Mammary epithelial cell (primary cell): ENCODE measurements at regions of chr20 and their contacts with region 1.

Region 1: GRCh38 chr20:58309575-58310290 is at the start of gene RAB22A:
- DNase-seq: peak; percentile 68
- H3K4me3 ChIP-seq: peak within 1 kb of the TSS; percentile 84 to 96 (median 93)
- H3K27ac ChIP-seq: peak within 1 kb of the TSS; percentile 91
- H3K4me1 ChIP-seq: peaks cover 50% of the 10 kb centered on the region
- H3K27me3 ChIP-seq: no peaks in the 10 kb centered on the region
- CTCF ChIP-seq: no peak
- total RNA-seq, gene RAB22A: 24.7 to 24.8 TPM

Region 2: GRCh38 chr20:58251921-58252591 is 57.7 kb before region 1 on chr20:
- CTCF ChIA-PET with region 1: no interaction called
- dilution Hi-C with region 1: no loop called
- in situ Hi-C with region 1: loop called in 1 of 2 experiments (anchors 5 kb)
- intact Hi-C with region 1: no loop called
- DNase-seq: peak; percentile 85
- H3K4me3 ChIP-seq: no peak overlapping the region
- H3K27ac ChIP-seq: peak overlapping the region; percentile 57
- H3K4me1 ChIP-seq: peaks cover 14% of the 10 kb centered on the region
- H3K27me3 ChIP-seq: no peaks in the 10 kb centered on the region
- CTCF ChIP-seq: no peak

Region 3: DNA sequence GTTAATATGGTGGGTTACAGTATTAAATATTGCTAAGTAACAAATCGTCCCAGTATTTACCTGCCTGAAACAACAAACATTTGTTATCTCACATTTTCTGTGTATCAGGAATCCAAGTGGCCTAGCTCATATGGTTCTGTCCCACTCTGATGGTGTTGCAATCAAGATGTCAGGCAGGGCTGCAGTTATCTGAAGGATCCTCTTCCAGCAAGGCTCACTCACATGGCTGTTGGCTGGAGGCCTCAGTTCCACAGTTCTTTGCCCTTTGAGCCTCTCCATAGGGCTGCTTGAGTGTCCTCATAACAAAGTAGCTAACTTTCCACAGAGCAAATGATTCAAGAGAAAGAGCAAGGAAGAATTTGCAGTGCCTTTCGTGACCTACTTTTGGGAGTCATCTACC is 17.5 kb after region 1 on chr20:
- CTCF ChIA-PET with region 1: no interaction called
- dilution Hi-C with region 1: no loop called
- in situ Hi-C with region 1: no loop called
- intact Hi-C with region 1: loop called (anchors 2 kb)
- DNase-seq: no peak
- H3K4me3 ChIP-seq: no peak overlapping the region
- H3K27ac ChIP-seq: no peak overlapping the region
- H3K4me1 ChIP-seq: no peaks in the 10 kb centered on the region
- H3K27me3 ChIP-seq: no peaks in the 10 kb centered on the region
- CTCF ChIP-seq: no peak

Region 4: GRCh38 chr20:58388882-58389323 is 79.2 kb after region 1 on chr20 and contains the start of gene VAPB:
- CTCF ChIA-PET with region 1: no interaction called
- dilution Hi-C with region 1: no loop called
- in situ Hi-C with region 1: no loop called
- intact Hi-C with region 1: loop called (anchors 2 kb)
- DNase-seq: peak; percentile 92
- H3K4me3 ChIP-seq: peak within 1 kb of the TSS; percentile 81 to 91 (median 90)
- H3K27ac ChIP-seq: peak within 1 kb of the TSS; percentile 93
- H3K4me1 ChIP-seq: peaks cover 10% of the 10 kb centered on the region
- H3K27me3 ChIP-seq: no peaks in the 10 kb centered on the region
- CTCF ChIP-seq: no peak
- total RNA-seq, gene VAPB: 14.7 to 52.8 TPM

Region 5: DNA sequence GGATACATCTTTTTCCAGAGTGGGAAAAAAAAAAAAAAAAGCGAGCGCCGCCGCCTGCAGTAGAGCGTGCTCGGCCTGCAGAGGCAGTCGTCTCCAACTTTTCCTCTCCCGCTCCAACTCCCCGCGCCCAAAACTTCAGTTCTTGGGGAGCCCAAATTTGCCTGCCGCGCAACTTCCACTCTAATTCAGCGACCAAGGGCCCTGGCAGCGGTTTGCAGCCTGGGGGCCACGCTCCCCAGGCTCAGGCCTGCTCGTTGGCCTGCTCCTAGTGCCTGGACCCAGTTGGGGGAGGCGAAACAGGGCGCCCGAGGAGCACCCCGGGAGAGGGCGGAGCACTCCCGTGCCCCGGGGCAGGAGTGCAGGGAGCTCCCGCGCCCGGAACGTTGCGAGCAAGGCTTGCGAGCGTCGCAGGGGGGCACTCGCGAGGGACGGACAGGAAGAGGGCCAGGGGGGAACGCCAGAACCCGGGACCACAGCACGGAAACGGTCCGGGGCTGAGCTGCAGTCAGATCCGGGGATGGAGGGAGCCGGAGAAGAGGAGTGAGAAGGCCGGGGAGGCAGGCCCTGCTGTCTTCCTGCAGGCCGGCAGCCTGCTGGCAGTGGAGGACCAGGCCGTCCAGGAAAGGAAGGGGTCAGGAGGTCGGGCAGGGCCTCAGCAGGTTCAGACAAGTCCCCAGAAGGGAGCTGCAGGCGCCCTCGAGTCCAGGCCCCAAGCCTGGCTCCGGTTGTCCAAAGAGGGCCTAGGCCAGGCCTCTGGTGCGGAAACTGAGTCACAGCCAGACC is 341.2 kb after region 1 on chr20 and contains the start of gene STX16:
- CTCF ChIA-PET with region 1: no interaction called
- dilution Hi-C with region 1: no loop called
- in situ Hi-C with region 1: no loop called
- intact Hi-C with region 1: loop called (anchors 5 kb)
- DNase-seq: peak; percentile 95
- H3K4me3 ChIP-seq: peak within 1 kb of the TSS; percentile 77 to 93 (median 91)
- H3K27ac ChIP-seq: peak within 1 kb of the TSS; percentile 84
- H3K4me1 ChIP-seq: peaks cover 19% of the 10 kb centered on the region
- H3K27me3 ChIP-seq: no peaks in the 10 kb centered on the region
- CTCF ChIP-seq: peak; percentile 43 to 58
- total RNA-seq, gene STX16: 34.7 to 71.7 TPM